Activated T-helper 2 cell treated with anti-CD3 and anti-CD28 coated beads, Interferon-gamma antibody, Interleukin-2, Interleukin-4, amounts not matched to agents 10 μg/mL and 5 μg/mL and 100 μg/mL, durations not matched to agents 14 hours and 24 hours and 36 hours (primary cell): ENCODE measurements at regions of chr2 and their contacts with region 1.

Region 1: DNA sequence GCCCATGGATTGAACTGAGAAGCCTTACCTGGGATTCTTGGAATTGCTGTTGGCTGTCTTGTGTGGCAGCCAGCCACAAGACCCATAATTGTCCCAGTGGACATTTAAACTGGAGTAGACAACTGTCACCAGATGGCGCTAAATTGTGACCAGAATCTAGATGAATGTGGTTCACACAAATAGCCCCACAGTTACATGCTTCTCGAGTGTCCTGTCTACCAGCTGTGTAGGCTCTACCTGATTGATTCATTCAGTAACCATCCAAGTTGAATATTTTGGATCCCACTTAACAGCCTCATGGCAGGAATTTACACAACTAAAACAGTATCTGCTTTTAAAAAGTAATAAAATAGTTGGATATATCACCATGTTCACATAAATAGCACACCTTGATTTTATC is 73.2 kb downstream of the MAP4K4 start:
- DNase-seq: no peak
- H3K4me3 Mint-ChIP-seq: no peak overlapping the region
- H3K27ac Mint-ChIP-seq: no peak overlapping the region
- H3K4me1 Mint-ChIP-seq: peaks cover 55% of the 10 kb centered on the region
- H3K27me3 Mint-ChIP-seq: no peaks in the 10 kb centered on the region

Region 2: DNA sequence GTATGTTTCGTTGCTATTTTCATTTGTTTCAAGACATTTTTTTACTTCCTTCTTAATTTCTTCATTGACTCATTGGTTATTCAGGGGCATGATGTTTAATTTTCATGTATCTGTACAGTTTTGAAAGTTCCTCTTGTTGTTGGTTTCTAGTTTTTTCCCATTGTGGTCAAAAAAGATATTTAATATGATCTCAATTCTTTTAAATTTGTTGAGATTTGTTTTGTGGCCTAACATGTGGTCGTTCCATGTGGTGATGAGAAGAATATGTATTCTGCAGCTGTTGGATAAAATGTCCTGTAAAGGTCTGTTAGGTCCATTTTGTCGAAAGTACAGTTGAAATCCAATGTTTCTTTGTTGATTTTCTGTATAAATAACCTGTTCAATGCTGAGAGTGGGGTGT is 183.5 kb before region 1 on chr2:
- intact Hi-C with region 1: no loop called
- DNase-seq: no peak
- H3K4me3 Mint-ChIP-seq: no peak overlapping the region
- H3K27ac Mint-ChIP-seq: no peak overlapping the region
- H3K4me1 Mint-ChIP-seq: peaks cover 8% of the 10 kb centered on the region
- H3K27me3 Mint-ChIP-seq: peaks cover 9% of the 10 kb centered on the region

Region 3: DNA sequence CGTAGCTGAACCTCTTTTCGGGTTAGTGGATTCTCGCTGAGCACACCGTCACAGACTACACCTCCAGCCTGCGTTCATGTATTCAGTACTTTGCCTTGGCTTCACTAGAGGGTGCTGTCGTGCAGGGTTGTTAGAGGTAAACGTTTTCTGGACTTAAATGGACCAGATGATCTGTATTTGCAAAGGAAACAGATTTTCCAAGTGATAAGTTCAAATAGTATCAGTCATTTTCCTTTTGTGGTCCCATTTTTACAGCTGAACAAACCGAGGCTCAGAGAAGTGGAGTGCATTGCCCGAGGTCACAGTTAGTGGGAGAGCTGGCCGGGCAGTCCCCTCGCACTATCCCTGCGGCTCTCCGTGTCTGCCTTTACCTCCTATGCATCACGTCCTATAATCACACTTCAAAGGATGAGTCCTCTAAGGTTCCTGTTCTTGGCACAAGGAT is 52.6 kb after region 1 on chr2:
- intact Hi-C with region 1: loop called (anchors 2 kb)
- DNase-seq: peak; percentile 51
- H3K4me3 Mint-ChIP-seq: peak overlapping the region; percentile 18
- H3K27ac Mint-ChIP-seq: peak overlapping the region; percentile 21
- H3K4me1 Mint-ChIP-seq: peaks cover 63% of the 10 kb centered on the region
- H3K27me3 Mint-ChIP-seq: no peaks in the 10 kb centered on the region